ENCODE measurements at regions of chr1 and their contacts with region 1.

Region 1: GRCh38 chr1:162854245-162854882 is 6.6 kb downstream of the CCDC190 start:
- DNase-seq: peak; percentile 56
- H3K4me3 Mint-ChIP-seq: no peak overlapping the region
- H3K27ac Mint-ChIP-seq: no peak overlapping the region
- H3K4me1 Mint-ChIP-seq: no peaks in the 10 kb centered on the region
- H3K27me3 Mint-ChIP-seq: peaks cover 8% of the 10 kb centered on the region

Region 2: GRCh38 chr1:162564762-162565218 is 289.6 kb before region 1 on chr1:
- CTCF ChIA-PET with region 1: no interaction called
- POLR2A ChIA-PET with region 1: no interaction called
- DNase-seq: no peak
- H3K4me3 Mint-ChIP-seq: no peak overlapping the region
- H3K27ac Mint-ChIP-seq: no peak overlapping the region
- H3K4me1 Mint-ChIP-seq: peaks cover 30% of the 10 kb centered on the region
- H3K27me3 Mint-ChIP-seq: no peaks in the 10 kb centered on the region

Region 3: DNA sequence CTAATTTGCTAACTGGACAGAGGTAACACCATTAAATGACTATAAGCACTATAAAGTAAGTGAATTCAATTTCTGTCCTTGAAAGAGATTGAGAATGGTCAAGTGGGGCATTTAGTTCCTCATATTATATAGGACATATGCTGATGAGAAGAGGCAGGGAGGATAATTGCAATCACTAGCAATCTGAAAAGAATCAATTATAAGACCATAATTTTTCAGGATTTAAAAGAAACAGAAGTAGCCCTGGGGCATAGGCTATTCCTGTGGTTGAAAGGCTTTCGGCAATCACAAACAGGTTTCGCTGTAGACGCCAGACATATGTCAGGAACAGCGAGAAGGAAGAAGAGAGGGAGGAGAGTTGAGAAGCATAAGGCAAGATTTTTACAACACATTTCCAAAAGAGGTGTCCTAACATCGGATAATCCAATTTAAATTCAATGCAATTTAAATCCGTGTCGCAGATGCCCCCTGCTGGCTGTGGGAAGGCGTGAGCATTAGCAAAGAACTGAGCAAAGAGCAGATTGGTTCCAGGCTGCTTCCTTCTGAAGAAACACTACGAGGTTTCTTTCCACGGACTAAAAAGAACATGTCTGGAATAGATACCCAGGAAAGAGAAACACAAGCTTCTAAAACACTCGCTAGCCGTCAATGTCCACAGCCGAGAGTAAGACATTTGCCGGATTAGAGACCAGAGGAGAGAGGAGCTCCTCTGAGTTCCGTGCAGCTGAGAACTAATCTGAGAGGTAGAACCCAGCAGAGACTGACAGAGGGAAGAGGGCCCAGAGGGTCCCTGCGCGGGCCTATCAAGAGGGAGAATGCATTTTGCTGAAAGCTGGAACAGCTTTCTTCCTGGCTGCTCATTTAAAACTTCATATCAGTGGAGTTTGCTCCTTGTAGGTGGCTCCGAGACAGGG is 320.4 kb after region 1 on chr1:
- CTCF ChIA-PET with region 1: interaction called, 11 read pairs
- POLR2A ChIA-PET with region 1: no interaction called
- DNase-seq: peak; percentile 41
- H3K4me3 Mint-ChIP-seq: no peak overlapping the region
- H3K27ac Mint-ChIP-seq: no peak overlapping the region
- H3K4me1 Mint-ChIP-seq: no peaks in the 10 kb centered on the region
- H3K27me3 Mint-ChIP-seq: peaks cover 1% of the 10 kb centered on the region